ENCODE measurements at regions of chr2 and their contacts with region 1.

Region 1: DNA sequence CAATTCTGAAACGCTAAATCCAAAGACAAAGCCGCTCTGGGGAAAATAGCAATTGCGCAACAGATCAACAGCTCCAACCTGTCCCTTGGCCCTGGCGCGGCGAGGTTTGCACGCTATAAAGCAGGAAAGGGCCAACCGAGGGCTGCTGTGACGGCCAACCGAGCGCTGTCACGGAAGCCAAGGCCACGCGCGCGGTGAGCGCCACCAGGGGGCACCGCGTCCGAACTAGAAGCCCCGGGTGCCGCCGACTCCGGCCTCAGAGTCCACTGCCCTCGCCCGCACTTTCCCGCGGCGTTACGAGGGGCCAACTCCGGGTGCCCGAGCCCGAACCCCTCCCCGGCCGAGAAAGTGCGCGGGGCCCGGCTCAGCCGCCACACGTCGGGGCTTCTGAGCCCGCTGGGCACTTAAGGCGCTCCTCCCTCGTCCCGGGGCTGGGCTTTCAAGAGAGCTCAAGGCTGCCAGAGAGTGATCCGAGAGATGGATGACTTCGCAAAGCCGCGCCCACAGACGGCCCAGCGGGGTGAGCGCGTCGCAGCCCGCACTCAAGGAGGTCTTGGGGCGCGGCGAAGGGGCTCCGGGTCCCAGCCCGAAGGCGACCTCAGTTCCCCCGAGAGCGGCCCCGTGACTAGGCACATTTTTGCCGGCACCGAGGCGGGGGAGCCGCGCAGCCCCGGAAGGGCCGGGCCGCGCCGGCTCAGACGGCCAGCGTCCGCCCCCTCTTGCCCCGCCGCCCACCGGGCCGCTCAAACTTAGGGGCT is 897 bp downstream of the NFE2L2 start:
- DNase-seq: peak; percentile 99
- H3K4me3 ChIP-seq: peak overlapping the region; percentile 66 to 93 (median 86)
- H3K4me3 Mint-ChIP-seq: peak overlapping the region; percentile 89 to 92
- H3K27ac ChIP-seq: peak overlapping the region; percentile 96 to 99
- H3K27ac Mint-ChIP-seq: peak overlapping the region; percentile 91 to 100 (median 94)
- H3K4me1 ChIP-seq: peaks cover 45 to 75% of the 10 kb centered on the region in 2 donors
- H3K4me1 Mint-ChIP-seq: peaks cover 63% of the 10 kb centered on the region
- H3K27me3 ChIP-seq: no peaks in the 10 kb centered on the region
- H3K27me3 Mint-ChIP-seq: no peaks in the 10 kb centered on the region
- CTCF ChIP-seq: peak; percentile 91

Region 2: GRCh38 chr2:177164584-177165052 is 99.0 kb before region 1 on chr2:
- intact Hi-C with region 1: loop called (anchors 2 to 10 kb)
- DNase-seq: peak; percentile 67 to 82 (median 77)
- H3K4me3 ChIP-seq: peak overlapping the region; percentile 58 to 98 (median 79)
- H3K4me3 Mint-ChIP-seq: no peak overlapping the region
- H3K27ac ChIP-seq: peak overlapping the region in 1 of 2 donors; percentile 86
- H3K27ac Mint-ChIP-seq: no peak overlapping the region
- H3K4me1 ChIP-seq: peaks cover 19% of the 10 kb centered on the region in 2 donors
- H3K4me1 Mint-ChIP-seq: peaks cover 18% of the 10 kb centered on the region
- H3K27me3 ChIP-seq: peaks cover 2% of the 10 kb centered on the region in 2 donors
- H3K27me3 Mint-ChIP-seq: no peaks in the 10 kb centered on the region
- CTCF ChIP-seq: peak; percentile 100

Region 3: DNA sequence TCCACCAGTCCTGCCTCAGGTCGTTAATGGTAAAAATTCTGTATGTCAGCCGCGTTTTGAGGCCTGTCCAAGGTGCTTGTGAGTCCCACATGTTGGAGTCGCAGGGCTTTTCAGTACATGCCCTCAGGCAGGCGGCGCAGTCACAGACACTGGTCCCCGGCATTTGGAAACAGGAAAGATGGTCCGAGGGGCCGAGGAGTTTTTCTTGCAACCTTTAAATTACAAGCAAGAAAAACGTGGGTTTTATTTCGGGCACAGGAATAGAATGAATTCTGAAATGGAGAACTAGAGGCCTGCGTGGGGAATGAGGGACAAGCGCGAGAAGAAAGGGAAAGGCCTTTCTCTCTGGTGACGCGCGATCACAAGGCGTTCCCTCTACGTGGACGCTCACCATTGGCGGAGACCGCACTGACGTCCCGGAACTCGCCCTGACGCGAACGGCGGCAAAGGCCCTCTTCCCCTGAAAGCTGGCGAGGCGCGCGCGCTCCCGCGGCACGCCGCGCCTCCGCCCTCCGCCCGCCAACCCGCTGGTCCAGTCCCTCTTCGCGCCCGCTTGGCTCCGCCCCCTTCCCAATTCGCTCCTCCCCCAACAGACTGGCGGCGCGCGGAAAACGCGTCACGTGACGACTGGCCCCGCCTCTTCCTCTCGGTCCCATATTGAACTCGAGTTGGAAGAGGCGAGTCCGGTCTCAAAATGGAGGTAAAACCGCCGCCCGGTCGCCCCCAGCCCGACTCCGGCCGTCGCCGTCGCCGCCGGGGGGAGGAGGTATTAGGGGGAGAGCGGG is 51.3 kb before region 1 on chr2 and contains the start of gene HNRNPA3:
- intact Hi-C with region 1: loop called in 1 of 2 experiments (anchors 2 kb)
- DNase-seq: peak; percentile 98 to 100 (median 100)
- H3K4me3 ChIP-seq: peak within 1 kb of the TSS; percentile 64 to 100 (median 96)
- H3K4me3 Mint-ChIP-seq: peak within 1 kb of the TSS; percentile 88 to 94
- H3K27ac ChIP-seq: peak within 1 kb of the TSS; percentile 99 to 100
- H3K27ac Mint-ChIP-seq: peak within 1 kb of the TSS; percentile 99 to 100 (median 100)
- H3K4me1 ChIP-seq: peaks cover 22 to 28% of the 10 kb centered on the region in 2 donors
- H3K4me1 Mint-ChIP-seq: peaks cover 38% of the 10 kb centered on the region
- H3K27me3 ChIP-seq: no peaks in the 10 kb centered on the region
- H3K27me3 Mint-ChIP-seq: no peaks in the 10 kb centered on the region
- CTCF ChIP-seq: no peak
- polyA plus RNA-seq, gene HNRNPA3: 26.5 to 71.7 (median 43.0) TPM

Region 4: GRCh38 chr2:177332041-177332991 is 68.7 kb after region 1 on chr2:
- intact Hi-C with region 1: loop called (anchors 5 to 10 kb)
- DNase-seq: peak; percentile 67 to 78 (median 75)
- H3K4me3 ChIP-seq: peak overlapping the region; percentile 9 to 64 (median 41)
- H3K4me3 Mint-ChIP-seq: peak overlapping the region; percentile 67 to 72
- H3K27ac ChIP-seq: peak overlapping the region in 1 of 2 donors; percentile 67
- H3K27ac Mint-ChIP-seq: peak overlapping the region in 6 of 7 donors; percentile 13 to 75 (median 42)
- H3K4me1 ChIP-seq: peaks cover 4 to 5% of the 10 kb centered on the region in 2 donors
- H3K4me1 Mint-ChIP-seq: peaks cover 13% of the 10 kb centered on the region
- H3K27me3 ChIP-seq: no peaks in the 10 kb centered on the region
- H3K27me3 Mint-ChIP-seq: no peaks in the 10 kb centered on the region
- CTCF ChIP-seq: peak; percentile 68

Region 5: GRCh38 chr2:177353187-177353478 is 89.5 kb after region 1 on chr2:
- intact Hi-C with region 1: no loop called
- DNase-seq: peak in 1 of 3 donors; percentile 29
- H3K4me3 ChIP-seq: peak overlapping the region in 1 of 3 experiments; percentile 60
- H3K4me3 Mint-ChIP-seq: peak overlapping the region in 1 of 2 donors; percentile 73
- H3K27ac ChIP-seq: peak overlapping the region; percentile 29 to 77
- H3K27ac Mint-ChIP-seq: peak overlapping the region in 4 of 7 donors; percentile 60 to 85 (median 77)
- H3K4me1 ChIP-seq: peaks cover 45 to 51% of the 10 kb centered on the region in 2 donors
- H3K4me1 Mint-ChIP-seq: peaks cover 13% of the 10 kb centered on the region
- H3K27me3 ChIP-seq: no peaks in the 10 kb centered on the region
- H3K27me3 Mint-ChIP-seq: peaks cover 0 to 4% (median 0%) of the 10 kb centered on the region in 3 donors
- CTCF ChIP-seq: no peak

Region 6: DNA sequence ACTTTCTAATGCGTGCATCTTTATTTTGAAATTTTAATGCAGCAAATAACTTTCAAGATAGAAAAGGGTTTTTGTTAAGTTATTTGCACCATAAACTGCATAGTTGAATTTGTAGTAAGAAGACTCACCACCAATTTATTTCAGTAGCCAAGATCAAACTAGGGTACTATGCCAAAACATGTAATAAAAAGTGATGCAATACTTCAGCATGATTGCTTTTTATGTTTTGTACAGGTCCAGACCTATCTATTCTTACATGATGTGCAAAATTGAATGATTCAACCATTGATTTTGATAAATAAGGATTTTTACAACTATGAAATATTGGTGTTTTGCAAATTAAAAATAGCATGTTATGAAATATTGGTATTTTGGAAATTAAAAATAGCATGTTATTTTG is 155.6 kb after region 1 on chr2:
- intact Hi-C with region 1: loop called in 1 of 2 experiments (anchors 5 kb)
- DNase-seq: no peak
- H3K4me3 ChIP-seq: no peak overlapping the region
- H3K4me3 Mint-ChIP-seq: no peak overlapping the region
- H3K27ac ChIP-seq: peak overlapping the region in 1 of 2 donors; percentile 6
- H3K27ac Mint-ChIP-seq: no peak overlapping the region
- H3K4me1 ChIP-seq: no peaks in the 10 kb centered on the region
- H3K4me1 Mint-ChIP-seq: peaks cover 5% of the 10 kb centered on the region
- H3K27me3 ChIP-seq: no peaks in the 10 kb centered on the region
- H3K27me3 Mint-ChIP-seq: no peaks in the 10 kb centered on the region
- CTCF ChIP-seq: no peak

Measured in CD14-positive monocyte (primary cell).